Left ventricle myocardium inferior (tissue), 1 donor: ENCODE measurements at regions of chr1 and their contacts with region 1.

Region 1: DNA sequence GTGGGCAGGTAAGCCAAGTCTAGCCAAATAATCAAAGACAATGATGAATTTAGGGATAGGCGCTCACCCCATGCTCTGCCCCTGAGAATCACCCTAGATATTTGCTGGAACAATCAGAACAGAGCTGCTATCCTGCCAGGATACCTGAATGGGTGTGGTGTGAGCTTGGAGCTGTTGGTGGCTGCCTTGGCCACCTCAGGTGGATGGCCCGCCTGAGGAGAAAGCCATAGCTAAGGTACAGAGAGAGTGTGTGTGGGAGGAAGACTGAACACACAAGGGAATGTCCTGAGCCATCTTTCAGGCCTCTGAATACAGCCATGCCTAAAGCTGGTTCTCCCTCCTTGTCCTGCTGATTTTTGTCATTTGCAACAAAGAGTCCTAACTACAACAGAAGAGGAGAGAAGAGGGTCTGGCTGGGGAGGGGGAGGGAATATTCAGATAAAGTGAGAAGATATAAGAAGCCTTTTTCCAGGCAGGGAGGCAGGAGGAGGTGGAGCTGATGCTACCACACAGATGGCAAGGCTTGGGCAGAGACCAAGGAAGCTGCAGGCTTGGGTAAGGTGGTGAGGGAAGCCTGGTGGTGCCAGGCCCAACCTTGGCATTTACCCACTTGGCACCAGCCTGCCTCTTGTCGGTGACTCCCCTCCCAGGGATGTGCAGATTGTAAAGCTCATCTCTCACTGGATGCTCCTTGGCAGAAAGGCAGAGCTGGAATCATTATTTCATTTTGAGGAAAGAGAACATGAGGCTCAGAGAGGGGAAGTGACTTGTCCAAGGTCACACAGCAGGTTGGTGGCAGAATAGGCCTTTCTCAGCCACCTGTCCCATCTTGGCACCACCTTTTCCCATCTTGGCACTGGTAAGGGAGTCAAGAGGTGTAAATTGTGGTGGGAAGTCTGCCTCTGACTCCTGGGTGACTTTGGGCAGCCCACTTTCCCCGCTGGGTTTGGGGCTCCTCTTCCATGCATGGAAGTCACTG is 49.7 kb downstream of the NKAIN1 start:
- DNase-seq: no peak
- H3K4me3 ChIP-seq: no peak overlapping the region
- H3K27ac ChIP-seq: no peak overlapping the region
- H3K4me1 ChIP-seq: no peaks in the 10 kb centered on the region
- H3K27me3 ChIP-seq: peaks cover 25% of the 10 kb centered on the region
- CTCF ChIP-seq: no peak

Region 2: DNA sequence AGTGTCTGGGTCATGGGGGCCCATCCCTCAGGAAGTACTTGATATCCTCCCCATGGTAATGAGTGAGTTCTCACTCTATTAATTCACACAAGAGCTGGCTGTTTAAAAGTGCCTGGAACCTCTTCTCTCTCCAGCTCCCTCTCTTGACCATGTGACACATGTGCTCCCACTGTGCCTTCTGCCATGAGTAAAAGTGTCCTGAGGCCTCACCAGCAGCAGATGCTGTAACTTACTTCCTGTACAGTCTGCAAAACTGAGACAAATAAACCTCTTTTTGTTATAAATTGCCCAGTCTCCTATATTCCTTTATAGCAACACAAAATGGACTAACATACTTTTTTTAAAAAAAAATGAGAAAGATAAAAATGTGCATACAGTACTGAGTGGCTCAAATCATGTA is 148.5 kb before region 1 on chr1:
- intact Hi-C with region 1: no loop called
- DNase-seq: no peak
- H3K4me3 ChIP-seq: no peak overlapping the region
- H3K27ac ChIP-seq: no peak overlapping the region
- H3K4me1 ChIP-seq: peaks cover 59% of the 10 kb centered on the region
- H3K27me3 ChIP-seq: no peaks in the 10 kb centered on the region
- CTCF ChIP-seq: no peak

Region 3: DNA sequence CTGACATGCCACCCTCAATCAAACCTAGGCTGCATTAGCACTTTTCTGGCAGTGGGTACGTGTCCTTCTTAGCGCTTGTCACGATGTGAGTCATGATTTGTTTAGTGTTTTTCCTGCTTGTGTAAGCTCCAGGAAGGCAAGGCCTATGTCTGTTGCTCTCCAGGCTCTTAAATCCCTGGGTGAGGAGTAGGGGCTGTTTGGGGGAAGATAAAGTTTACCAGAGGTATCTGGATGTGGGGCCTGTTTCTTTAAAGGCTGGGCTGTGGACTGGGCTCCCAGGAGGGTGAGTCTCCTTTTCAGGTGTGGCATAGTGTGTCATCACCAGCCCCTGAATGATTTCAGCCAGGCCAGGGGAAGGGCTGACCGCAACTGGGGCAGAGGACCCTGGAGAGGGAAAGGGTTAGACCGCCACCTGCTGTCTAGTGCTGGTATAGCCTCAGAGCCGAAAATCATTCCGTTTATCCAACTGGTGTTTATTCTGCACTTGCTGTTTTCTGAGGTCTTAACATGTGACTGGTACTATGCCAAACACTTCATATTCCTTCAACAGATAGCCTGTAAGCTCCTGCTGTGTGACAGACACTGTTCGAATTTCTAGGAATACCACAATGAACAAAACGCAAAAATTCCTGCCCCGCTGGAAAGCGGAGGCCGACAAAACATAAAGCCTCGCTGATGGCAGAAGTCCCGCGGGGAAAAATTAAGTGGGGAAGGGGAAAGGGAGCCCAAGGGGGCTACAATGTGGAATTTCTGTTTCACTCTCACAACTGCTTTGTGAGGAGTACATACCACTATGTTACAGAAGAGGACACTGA is 232.7 kb after region 1 on chr1:
- intact Hi-C with region 1: loop called (anchors 5 kb)
- DNase-seq: peak; percentile 49
- H3K4me3 ChIP-seq: no peak overlapping the region
- H3K27ac ChIP-seq: no peak overlapping the region
- H3K4me1 ChIP-seq: no peaks in the 10 kb centered on the region
- H3K27me3 ChIP-seq: peaks cover 36% of the 10 kb centered on the region
- CTCF ChIP-seq: peak; percentile 97